CD8-positive, alpha-beta memory T cell (primary cell): ENCODE measurements at regions of chr6 and their contacts with region 1.

Region 1: DNA sequence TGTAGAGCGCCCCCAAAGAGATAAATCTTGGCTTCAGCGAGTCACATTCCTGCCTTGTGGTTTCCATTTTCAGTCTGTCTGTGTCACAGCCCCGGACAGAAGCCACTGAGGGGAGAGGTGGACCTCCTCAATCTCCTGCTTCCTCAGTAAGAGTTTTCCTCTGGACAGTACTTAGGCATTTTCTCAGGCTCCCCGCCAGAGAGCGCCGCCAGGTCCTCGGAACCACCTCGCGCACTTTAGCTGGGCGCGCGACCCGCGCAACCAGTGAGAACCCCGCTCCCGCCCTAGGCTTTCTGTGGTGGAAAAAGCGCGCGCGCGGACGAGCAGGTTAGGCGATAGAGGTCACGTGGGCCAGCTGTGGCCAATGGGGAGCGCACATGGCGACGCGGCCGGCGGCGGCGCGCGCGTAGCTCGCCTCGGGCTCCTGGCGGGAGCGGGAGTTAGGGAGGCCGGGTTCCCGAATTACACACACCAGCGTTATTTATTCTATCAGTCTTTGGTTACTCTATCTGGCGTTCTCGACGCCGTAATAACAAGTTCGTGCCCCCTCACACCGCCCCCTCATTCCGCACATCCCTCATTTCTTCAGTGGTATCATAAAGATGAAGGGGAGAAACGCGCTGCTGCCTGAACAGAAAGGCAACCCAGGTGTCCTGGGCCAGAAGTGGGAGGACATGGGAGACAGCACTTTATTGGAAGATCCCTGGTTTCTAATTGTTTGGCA is 19.4 kb downstream of the PXT1 start:
- DNase-seq: peak; percentile 96 to 99 (median 98)
- H3K4me3 ChIP-seq: peak overlapping the region; percentile 71
- H3K4me3 Mint-ChIP-seq: peak overlapping the region; percentile 86 to 95 (median 94)
- H3K27ac ChIP-seq: peak overlapping the region; percentile 64
- H3K27ac Mint-ChIP-seq: peak overlapping the region; percentile 78 to 98 (median 94)
- H3K4me1 ChIP-seq: peaks cover 11% of the 10 kb centered on the region
- H3K4me1 Mint-ChIP-seq: peaks cover 14 to 18% (median 16%) of the 10 kb centered on the region in 3 donors
- H3K27me3 ChIP-seq: no peaks in the 10 kb centered on the region
- H3K27me3 Mint-ChIP-seq: no peaks in the 10 kb centered on the region

Region 2: DNA sequence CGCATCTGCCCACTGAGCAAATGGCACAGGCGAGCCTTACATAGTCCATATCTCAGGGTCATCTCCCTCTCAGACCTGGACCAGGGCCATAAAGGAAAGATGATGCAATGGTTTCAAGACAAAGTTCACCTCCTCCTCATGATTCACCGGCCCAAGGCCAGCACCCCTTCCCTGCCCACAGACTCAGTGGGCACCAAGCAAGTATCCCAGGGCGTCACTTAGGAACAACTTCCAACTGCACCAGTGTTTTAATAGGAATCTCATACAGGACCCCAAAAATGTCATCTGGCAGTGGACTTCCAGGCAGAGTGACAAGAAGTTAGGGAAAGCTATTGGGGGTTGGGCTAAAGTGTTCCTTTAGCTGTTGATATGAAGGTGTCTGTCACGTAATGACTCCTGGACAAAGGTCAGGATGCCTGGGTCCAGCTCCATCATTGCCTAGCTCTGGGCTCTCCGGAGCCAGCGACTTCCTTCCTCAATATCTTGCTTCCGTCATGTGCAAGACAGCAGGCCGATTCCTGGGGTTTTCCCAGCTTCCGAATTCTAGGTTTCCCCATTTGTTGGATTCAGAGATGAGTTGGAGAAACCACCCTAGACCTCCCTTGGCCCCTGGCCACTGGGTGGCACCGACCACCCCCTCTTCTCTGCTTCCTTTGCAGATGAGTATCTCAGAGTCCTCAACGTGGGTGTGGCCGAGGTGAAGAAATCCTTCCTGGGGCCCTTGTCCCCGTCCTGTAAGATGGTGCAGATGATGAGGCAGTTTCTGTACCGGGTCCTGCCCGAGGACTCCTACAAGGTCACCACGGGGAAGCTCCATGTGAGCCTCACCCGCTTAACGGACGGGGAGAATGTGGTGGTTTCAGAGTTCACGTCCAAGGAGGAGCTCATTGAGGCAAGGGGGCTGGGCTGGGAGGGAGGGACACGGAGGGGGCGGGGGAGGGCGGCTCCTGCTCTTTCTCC is 132.3 kb before region 1 on chr6:
- CTCF ChIA-PET with region 1: no interaction called
- POLR2A ChIA-PET with region 1: no interaction called
- DNase-seq: no peak
- H3K4me3 ChIP-seq: no peak overlapping the region
- H3K4me3 Mint-ChIP-seq: no peak overlapping the region
- H3K27ac ChIP-seq: no peak overlapping the region
- H3K27ac Mint-ChIP-seq: peak overlapping the region in 1 of 8 donors; percentile 5
- H3K4me1 ChIP-seq: peaks cover 10% of the 10 kb centered on the region
- H3K4me1 Mint-ChIP-seq: peaks cover 4 to 7% (median 7%) of the 10 kb centered on the region in 3 donors
- H3K27me3 ChIP-seq: peaks cover under 1% of the 10 kb centered on the region
- H3K27me3 Mint-ChIP-seq: peaks cover 17 to 24% of the 10 kb centered on the region in 2 donors

Region 3: DNA sequence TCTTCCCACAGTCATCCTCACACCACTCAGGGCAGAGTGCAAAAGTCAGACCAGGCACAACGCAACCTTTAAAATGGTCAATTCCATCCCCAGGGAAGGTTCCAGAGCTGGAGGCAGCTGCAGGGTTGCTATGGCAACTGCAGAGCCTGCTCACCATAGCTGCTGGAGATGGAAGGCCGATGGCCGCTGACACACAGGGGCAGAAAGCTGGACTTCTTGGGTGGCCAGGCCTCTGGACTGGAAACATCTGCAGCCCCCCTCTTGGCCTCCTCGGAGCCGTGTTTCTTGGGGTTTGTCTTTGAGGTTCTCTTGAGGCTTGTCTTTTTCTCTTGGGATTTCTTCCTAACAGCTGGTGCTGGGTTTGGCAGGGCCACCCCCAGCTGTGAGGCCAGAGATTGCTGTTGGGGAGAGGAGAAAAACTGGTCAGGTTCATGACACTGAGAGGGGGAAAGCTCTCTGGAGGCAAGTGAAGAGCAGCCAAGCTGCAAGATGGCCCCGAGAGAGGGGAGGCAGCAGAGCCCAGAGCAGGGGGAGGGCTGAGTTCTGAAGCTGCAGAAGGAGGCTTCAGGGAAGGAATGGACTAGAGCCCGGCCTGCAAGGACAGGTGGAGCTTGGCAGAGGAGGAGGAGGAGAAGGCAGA is 96.8 kb before region 1 on chr6:
- CTCF ChIA-PET with region 1: no interaction called
- POLR2A ChIA-PET with region 1: no interaction called
- DNase-seq: no peak
- H3K4me3 ChIP-seq: no peak overlapping the region
- H3K4me3 Mint-ChIP-seq: no peak overlapping the region
- H3K27ac ChIP-seq: no peak overlapping the region
- H3K27ac Mint-ChIP-seq: peak overlapping the region in 1 of 8 donors; percentile 43
- H3K4me1 ChIP-seq: no peaks in the 10 kb centered on the region
- H3K4me1 Mint-ChIP-seq: no peaks in the 10 kb centered on the region
- H3K27me3 ChIP-seq: no peaks in the 10 kb centered on the region
- H3K27me3 Mint-ChIP-seq: peaks cover 3 to 4% of the 10 kb centered on the region in 2 donors

Region 4: GRCh38 chr6:36442671-36443470 is 19.6 kb after region 1 on chr6 and contains the starts of genes KCTD20 and PXT1:
- CTCF ChIA-PET with region 1: interaction called, 10 read pairs
- POLR2A ChIA-PET with region 1: interaction called, 9 read pairs
- DNase-seq: peak; percentile 76 to 89 (median 84)
- H3K4me3 ChIP-seq: peak within 1 kb of the TSS; percentile 98
- H3K4me3 Mint-ChIP-seq: peak within 1 kb of the TSS; percentile 96 to 98 (median 98)
- H3K27ac ChIP-seq: peak within 1 kb of the TSS; percentile 97
- H3K27ac Mint-ChIP-seq: peak within 1 kb of the TSS; percentile 90 to 99 (median 97)
- H3K4me1 ChIP-seq: peaks cover 36% of the 10 kb centered on the region
- H3K4me1 Mint-ChIP-seq: peaks cover 43 to 59% (median 56%) of the 10 kb centered on the region in 3 donors
- H3K27me3 ChIP-seq: no peaks in the 10 kb centered on the region
- H3K27me3 Mint-ChIP-seq: peaks cover 0 to 3% of the 10 kb centered on the region in 2 donors
- total RNA-seq, gene KCTD20: 52.3 to 52.4 TPM
- total RNA-seq, gene PXT1: 0.20 TPM in 1 of 2 experiments, not detected in the other

Region 5: DNA sequence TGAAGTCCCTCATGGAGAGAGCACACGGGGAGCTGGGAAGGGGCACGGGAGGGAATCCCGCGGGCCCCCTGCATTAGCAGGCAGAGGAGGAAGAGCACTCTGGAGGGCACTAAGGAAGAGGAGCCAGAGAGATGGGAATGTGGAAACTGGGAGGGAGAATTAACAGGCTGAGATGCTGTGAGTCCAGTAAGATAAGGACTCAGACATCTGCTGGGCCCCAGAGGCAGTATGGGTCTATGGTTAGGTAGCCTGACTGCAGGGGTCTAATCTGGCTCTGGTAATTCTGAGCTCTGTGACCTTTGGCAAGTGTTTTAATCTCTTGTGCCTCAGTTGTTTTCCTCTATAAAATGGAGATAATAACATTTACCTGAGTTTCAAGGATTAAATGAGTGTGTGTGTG is 155.2 kb after region 1 on chr6:
- CTCF ChIA-PET with region 1: interaction called, 11 read pairs
- POLR2A ChIA-PET with region 1: no interaction called
- DNase-seq: no peak
- H3K4me3 ChIP-seq: no peak overlapping the region
- H3K4me3 Mint-ChIP-seq: no peak overlapping the region
- H3K27ac ChIP-seq: no peak overlapping the region
- H3K27ac Mint-ChIP-seq: peak overlapping the region in 2 of 8 donors; percentile 6 to 10
- H3K4me1 ChIP-seq: peaks cover 8% of the 10 kb centered on the region
- H3K4me1 Mint-ChIP-seq: peaks cover 3 to 9% (median 8%) of the 10 kb centered on the region in 3 donors
- H3K27me3 ChIP-seq: no peaks in the 10 kb centered on the region
- H3K27me3 Mint-ChIP-seq: peaks cover 0 to 3% of the 10 kb centered on the region in 2 donors